AG04450 (cell line): ENCODE measurements at regions of chr1 and their contacts with region 1.

Region 1: DNA sequence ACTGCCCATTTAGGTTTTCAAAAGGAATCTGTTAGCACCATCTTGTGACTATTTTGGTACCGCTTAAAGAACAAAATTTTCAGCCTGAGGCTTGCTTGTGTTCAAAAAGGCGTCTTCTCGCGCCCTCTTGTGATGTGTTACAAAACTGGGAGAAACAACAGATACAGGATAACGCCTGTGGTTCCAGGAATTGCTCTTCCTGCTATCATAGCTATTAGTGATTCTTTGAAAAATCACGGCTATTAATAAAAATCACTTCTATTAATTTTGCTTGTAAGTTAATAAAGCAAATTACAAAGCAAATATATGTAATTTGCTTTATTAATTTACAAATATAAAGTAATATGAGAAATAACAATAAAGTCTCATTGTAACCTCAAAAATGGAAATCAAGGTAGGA is 82.2 kb upstream of the ABCD3 start:
- DNase-seq: peak; percentile 88
- H3K4me3 ChIP-seq: no peak overlapping the region
- H3K27ac ChIP-seq: no peak overlapping the region
- H3K27me3 ChIP-seq: peaks cover 9% of the 10 kb centered on the region
- CTCF ChIP-seq: peak; percentile 86

Region 2: GRCh38 chr1:93909146-93910050 is 426.6 kb before region 1 on chr1 and contains the start of gene GCLM:
- CTCF ChIA-PET with region 1: interaction called, 38 read pairs
- POLR2A ChIA-PET with region 1: no interaction called
- DNase-seq: peak; percentile 86
- H3K4me3 ChIP-seq: peak within 1 kb of the TSS; percentile 95
- H3K27ac ChIP-seq: peak within 1 kb of the TSS; percentile 33
- H3K27me3 ChIP-seq: peaks cover 2% of the 10 kb centered on the region
- CTCF ChIP-seq: peak; percentile 78
- polyA plus RNA-seq, gene GCLM: 45.1 and 58.6 TPM in 2 replicates

Region 3: GRCh38 chr1:94012686-94013624 is 323.0 kb before region 1 on chr1:
- CTCF ChIA-PET with region 1: interaction called, 14 read pairs
- POLR2A ChIA-PET with region 1: no interaction called
- DNase-seq: no peak
- H3K4me3 ChIP-seq: no peak overlapping the region
- H3K27ac ChIP-seq: no peak overlapping the region
- H3K27me3 ChIP-seq: peaks cover 6% of the 10 kb centered on the region
- CTCF ChIP-seq: no peak

Region 4: GRCh38 chr1:94061513-94062443 is 274.2 kb before region 1 on chr1:
- CTCF ChIA-PET with region 1: interaction called, 258 read pairs
- POLR2A ChIA-PET with region 1: interaction called, 6 read pairs
- DNase-seq: peak; percentile 57
- H3K4me3 ChIP-seq: no peak overlapping the region
- H3K27ac ChIP-seq: peak overlapping the region; percentile 33
- H3K27me3 ChIP-seq: no peaks in the 10 kb centered on the region
- CTCF ChIP-seq: peak; percentile 97

Region 5: GRCh38 chr1:94205639-94206038 is 130.3 kb before region 1 on chr1:
- CTCF ChIA-PET with region 1: interaction called, 20 read pairs
- POLR2A ChIA-PET with region 1: no interaction called
- DNase-seq: no peak
- H3K4me3 ChIP-seq: no peak overlapping the region
- H3K27ac ChIP-seq: no peak overlapping the region
- H3K27me3 ChIP-seq: no peaks in the 10 kb centered on the region
- CTCF ChIP-seq: no peak

Region 6: DNA sequence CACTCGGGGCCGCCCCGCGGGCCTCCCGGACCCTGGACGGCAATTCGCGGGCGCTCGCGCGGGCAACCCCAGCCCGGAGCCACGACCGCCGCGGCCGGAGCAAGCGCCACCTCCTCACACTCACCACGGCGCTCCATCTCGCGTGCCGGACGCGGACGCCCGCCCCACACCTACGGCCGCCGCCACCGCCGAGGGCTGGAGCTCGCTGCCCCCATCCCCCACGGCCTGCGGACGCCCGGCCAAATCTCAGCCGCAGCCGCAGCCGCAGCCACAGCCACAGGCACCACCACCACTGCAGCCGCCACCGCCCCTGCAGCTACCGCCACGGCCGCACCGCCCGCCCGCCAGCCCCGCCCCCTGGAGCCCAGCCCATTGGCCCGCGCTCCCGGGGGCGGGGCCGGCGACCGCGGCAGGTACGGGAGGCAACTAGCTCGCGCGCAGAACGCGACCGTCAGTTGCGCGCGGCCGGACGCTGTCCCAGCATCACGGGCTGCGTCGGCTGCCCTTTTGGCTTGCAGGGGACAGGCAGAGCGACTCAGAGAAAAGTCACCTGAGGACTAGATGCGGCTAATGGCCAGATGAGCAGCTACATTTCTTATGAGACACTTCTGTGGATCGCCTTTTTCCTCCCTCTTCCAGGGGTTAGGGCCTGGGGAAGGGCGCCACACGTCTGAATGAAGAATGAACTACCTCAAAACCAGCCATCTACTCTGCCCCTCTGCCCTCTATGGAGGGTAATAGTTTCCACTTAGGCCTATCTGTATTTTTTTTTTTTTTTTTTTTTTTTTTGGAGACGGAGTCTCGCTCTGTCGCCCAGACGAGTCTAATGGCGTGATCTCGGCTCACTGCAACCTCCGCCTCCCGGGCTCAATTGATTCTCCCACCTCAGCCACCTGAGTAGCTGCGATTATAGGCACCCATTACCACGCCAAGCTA is 98.4 kb before region 1 on chr1 and contains the start of gene ARHGAP29:
- CTCF ChIA-PET with region 1: interaction called, 20 read pairs
- POLR2A ChIA-PET with region 1: interaction called, 11 read pairs
- DNase-seq: no peak
- H3K4me3 ChIP-seq: peak within 1 kb of the TSS; percentile 77
- H3K27ac ChIP-seq: no peak within 1 kb of the TSS
- H3K27me3 ChIP-seq: no peaks in the 10 kb centered on the region
- CTCF ChIP-seq: no peak
- polyA plus RNA-seq, gene ARHGAP29: 21.3 and 30.4 TPM in 2 replicates

Region 7: GRCh38 chr1:94355485-94355980 is 19.6 kb after region 1 on chr1:
- CTCF ChIA-PET with region 1: no interaction called
- POLR2A ChIA-PET with region 1: no interaction called
- DNase-seq: no peak
- H3K4me3 ChIP-seq: no peak overlapping the region
- H3K27ac ChIP-seq: no peak overlapping the region
- H3K27me3 ChIP-seq: peaks cover 29% of the 10 kb centered on the region
- CTCF ChIP-seq: no peak

Region 8: GRCh38 chr1:94805912-94806311 is 470.0 kb after region 1 on chr1:
- CTCF ChIA-PET with region 1: interaction called, 16 read pairs
- POLR2A ChIA-PET with region 1: no interaction called
- DNase-seq: no peak
- H3K4me3 ChIP-seq: no peak overlapping the region
- H3K27ac ChIP-seq: no peak overlapping the region
- H3K27me3 ChIP-seq: no peaks in the 10 kb centered on the region
- CTCF ChIP-seq: peak; percentile 95

Region 9: GRCh38 chr1:94971491-94971924 is 635.6 kb after region 1 on chr1:
- CTCF ChIA-PET with region 1: no interaction called
- POLR2A ChIA-PET with region 1: no interaction called
- DNase-seq: no peak
- H3K4me3 ChIP-seq: no peak overlapping the region
- H3K27ac ChIP-seq: no peak overlapping the region
- H3K27me3 ChIP-seq: no peaks in the 10 kb centered on the region
- CTCF ChIP-seq: no peak